Uterus (tissue), 4 donors: ENCODE measurements at regions of chr12 and their contacts with region 1.

Region 1: GRCh38 chr12:12376646-12377448 is 20.0 kb downstream of the BORCS5 start:
- DNase-seq: peak in 1 of 2 donors; percentile 50
- H3K4me3 ChIP-seq: no peak overlapping the region
- H3K27ac ChIP-seq: no peak overlapping the region
- H3K4me1 ChIP-seq: no peaks in the 10 kb centered on the region
- H3K27me3 ChIP-seq: no peaks in the 10 kb centered on the region
- CTCF ChIP-seq: peak; percentile 69 to 91 (median 76)
- POLR2A ChIP-seq: no peak

Region 2: GRCh38 chr12:12562585-12563261 is 185.9 kb after region 1 on chr12 and contains the start of gene DUSP16:
- intact Hi-C with region 1: loop called (anchors 10 kb)
- DNase-seq: peak; percentile 93 to 94
- H3K4me3 ChIP-seq: peak within 1 kb of the TSS; percentile 96 to 98
- H3K27ac ChIP-seq: peak within 1 kb of the TSS; percentile 100
- H3K4me1 ChIP-seq: no peaks in the 10 kb centered on the region
- H3K27me3 ChIP-seq: no peaks in the 10 kb centered on the region
- CTCF ChIP-seq: peak in 3 of 4 experiments; percentile 24 to 57 (median 36)
- POLR2A ChIP-seq: peak; percentile 91 to 95
- total RNA-seq, gene DUSP16: 20.5 to 46.0 (median 35.5) TPM

Region 3: GRCh38 chr12:12704593-12705230 is 327.9 kb after region 1 on chr12:
- intact Hi-C with region 1: loop called (anchors 5 kb)
- DNase-seq: peak; percentile 56 to 81
- H3K4me3 ChIP-seq: no peak overlapping the region
- H3K27ac ChIP-seq: peak overlapping the region; percentile 28 to 46
- H3K4me1 ChIP-seq: no peaks in the 10 kb centered on the region
- H3K27me3 ChIP-seq: no peaks in the 10 kb centered on the region
- CTCF ChIP-seq: peak; percentile 92 to 99 (median 98)
- POLR2A ChIP-seq: no peak